HepG2 (cell line): ENCODE measurements at regions of chr20 and their contacts with region 1.

Region 1: DNA sequence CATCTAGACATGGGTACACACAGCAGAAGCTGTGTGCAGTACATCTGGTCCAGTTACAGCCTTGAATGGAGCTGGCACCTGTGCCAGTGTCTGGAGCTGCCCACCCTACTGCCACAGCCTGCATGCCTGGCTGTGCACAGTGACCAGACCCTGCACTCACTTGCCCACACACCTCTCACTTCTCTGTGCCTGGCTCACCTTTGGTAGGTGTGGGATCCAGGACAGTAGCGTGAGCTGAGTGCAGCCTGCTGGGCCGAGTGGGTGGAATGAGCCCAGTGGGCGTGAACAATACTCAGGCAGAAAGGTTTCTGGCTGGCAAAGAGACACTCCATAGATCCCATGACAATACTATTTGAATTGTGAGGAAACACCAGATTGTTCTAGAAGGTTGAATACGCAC is 839.5 kb upstream of the FLRT3 start:
- DNase-seq: no peak
- ATAC-seq: peak; percentile 56
- H3K4me3 ChIP-seq: no peak overlapping the region
- H3K27ac ChIP-seq: no peak overlapping the region
- H3K4me1 ChIP-seq: no peaks in the 10 kb centered on the region
- H3K27me3 ChIP-seq: no peaks in the 10 kb centered on the region
- CTCF ChIP-seq: no peak
- EP300 ChIP-seq: no peak
- POLR2A ChIP-seq: no peak
- RAD21 ChIP-seq: no peak

Region 2: GRCh38 chr20:15146948-15147347 is 30.0 kb before region 1 on chr20:
- CTCF ChIA-PET with region 1: no interaction called
- POLR2A ChIA-PET with region 1: no interaction called
- in situ Hi-C with region 1: no loop called
- intact Hi-C with region 1: loop called (anchors 1 kb)
- DNase-seq: no peak
- ATAC-seq: no peak
- H3K4me3 ChIP-seq: no peak overlapping the region
- H3K27ac ChIP-seq: no peak overlapping the region
- H3K4me1 ChIP-seq: no peaks in the 10 kb centered on the region
- H3K27me3 ChIP-seq: no peaks in the 10 kb centered on the region; a peak in 1 of 5 replicates
- CTCF ChIP-seq: no peak
- EP300 ChIP-seq: no peak
- POLR2A ChIP-seq: no peak
- RAD21 ChIP-seq: no peak